BJ (cell line): ENCODE measurements at regions of chr2 and their contacts with region 1.

Region 1: GRCh38 chr2:18378020-18378653 is 182.3 kb downstream of the RDH14 start:
- DNase-seq: no peak
- H3K4me3 ChIP-seq: no peak overlapping the region
- H3K27me3 ChIP-seq: no peaks in the 10 kb centered on the region; the same call in 1 of the 2 replicates
- CTCF ChIP-seq: peak; percentile 79

Region 2: GRCh38 chr2:18178736-18179349 is 199.3 kb before region 1 on chr2:
- CTCF ChIA-PET with region 1: interaction called, 11 read pairs
- POLR2A ChIA-PET with region 1: no interaction called
- DNase-seq: no peak
- H3K4me3 ChIP-seq: no peak overlapping the region
- H3K27me3 ChIP-seq: no peaks in the 10 kb centered on the region
- CTCF ChIP-seq: peak; percentile 70

Region 3: GRCh38 chr2:18219676-18220075 is 158.5 kb before region 1 on chr2:
- CTCF ChIA-PET with region 1: interaction called, 13 read pairs
- POLR2A ChIA-PET with region 1: no interaction called
- DNase-seq: no peak
- H3K4me3 ChIP-seq: no peak overlapping the region
- H3K27me3 ChIP-seq: no peaks in the 10 kb centered on the region
- CTCF ChIP-seq: peak; percentile 42

Region 4: GRCh38 chr2:18413676-18414396 is 35.7 kb after region 1 on chr2:
- CTCF ChIA-PET with region 1: no interaction called
- POLR2A ChIA-PET with region 1: no interaction called
- DNase-seq: peak; percentile 60
- H3K4me3 ChIP-seq: no peak overlapping the region
- H3K27me3 ChIP-seq: no peaks in the 10 kb centered on the region
- CTCF ChIP-seq: no peak